Sciatic nerve (tissue), 2 donors: ENCODE measurements at regions of chr16 and their contacts with region 1.

Region 1: DNA sequence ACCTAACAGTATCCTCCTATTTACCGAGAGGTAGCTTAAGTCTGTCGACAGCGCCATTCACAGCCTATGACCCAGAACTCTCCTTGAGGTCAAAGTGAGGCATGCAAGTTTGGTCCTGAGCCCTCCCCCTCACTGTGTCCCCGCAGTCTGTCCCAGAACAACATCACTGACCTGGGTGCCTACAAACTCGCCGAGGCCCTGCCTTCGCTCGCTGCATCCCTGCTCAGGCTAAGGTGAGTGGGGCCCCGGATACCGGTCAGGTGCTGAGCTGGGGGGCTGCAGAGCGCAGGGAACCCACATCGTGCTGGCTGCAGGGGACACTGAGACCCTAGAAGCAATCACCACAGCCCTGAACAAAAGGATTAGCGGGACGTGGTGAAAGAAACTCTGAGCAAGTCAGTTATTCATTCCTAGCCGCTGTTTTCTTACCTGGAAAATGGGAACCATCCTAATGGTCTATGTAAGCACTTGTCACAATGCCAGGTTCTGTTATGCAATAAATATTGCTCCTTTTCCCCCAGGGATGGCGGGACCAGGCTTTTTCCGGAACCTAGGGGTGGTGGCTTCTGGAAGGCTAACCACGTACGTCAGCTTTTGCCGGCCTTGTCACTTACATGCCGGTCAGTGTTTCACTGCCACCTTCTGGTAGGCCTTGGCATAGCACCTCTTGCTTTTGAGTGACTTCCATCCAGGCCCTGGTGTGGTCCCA is 23.8 kb downstream of the DEXI start:
- DNase-seq: peak; percentile 97
- ATAC-seq: peak; percentile 93

Region 2: DNA sequence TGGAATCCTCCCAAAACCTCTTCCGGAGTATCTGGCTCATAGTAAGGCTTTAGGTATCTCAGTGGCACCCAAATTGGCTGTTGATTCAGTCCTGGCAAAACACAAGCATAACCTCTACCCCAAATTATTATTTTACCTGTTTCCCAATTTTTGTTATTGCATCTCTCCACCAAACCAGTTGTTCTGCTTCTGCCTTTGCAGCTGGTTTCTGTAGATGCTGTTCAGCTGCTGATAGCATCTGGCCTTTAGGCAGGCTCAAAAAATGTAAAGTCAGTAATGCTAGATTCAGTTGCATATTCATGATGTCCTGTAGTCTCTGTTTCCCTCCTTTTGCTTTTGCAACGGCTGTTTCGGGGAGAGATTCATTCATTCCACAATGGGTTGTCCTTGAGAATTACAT is 498.7 kb before region 1 on chr16:
- intact Hi-C with region 1: no loop called
- DNase-seq: no peak
- ATAC-seq: no peak

Region 3: GRCh38 chr16:10509534-10510025 is 408.9 kb before region 1 on chr16:
- intact Hi-C with region 1: loop called (anchors 5 kb)
- DNase-seq: no peak
- ATAC-seq: peak; percentile 94

Region 4: GRCh38 chr16:10752843-10753523 is 165.5 kb before region 1 on chr16:
- intact Hi-C with region 1: loop called (anchors 10 kb)
- DNase-seq: peak; percentile 82
- ATAC-seq: peak; percentile 80